Activated B cell treated with CpG ODN at 0.5 μM for 24 hours (primary cell): ENCODE measurements at regions of chr1 and their contacts with region 1.

Region 1: GRCh38 chr1:3624200-3625136 is at the start of gene TPRG1L:
- DNase-seq: peak; percentile 99
- ATAC-seq: peak; percentile 97
- H3K4me3 Mint-ChIP-seq: peak within 1 kb of the TSS; percentile 95
- H3K27ac Mint-ChIP-seq: peak within 1 kb of the TSS; percentile 82
- H3K4me1 Mint-ChIP-seq: peaks cover 46% of the 10 kb centered on the region
- H3K27me3 Mint-ChIP-seq: no peaks in the 10 kb centered on the region
- CTCF ChIP-seq: no peak
- total RNA-seq, gene TPRG1L: 26.5 and 27.0 TPM in 2 replicates

Region 2: GRCh38 chr1:2642560-2643413 is 981.7 kb before region 1 on chr1:
- CTCF ChIA-PET with region 1: no interaction called
- POLR2A ChIA-PET with region 1: no interaction called
- intact Hi-C with region 1: loop called (anchors 10 kb)
- DNase-seq: peak; percentile 92
- ATAC-seq: peak; percentile 79
- H3K4me3 Mint-ChIP-seq: peak overlapping the region; percentile 80
- H3K27ac Mint-ChIP-seq: peak overlapping the region; percentile 73
- H3K4me1 Mint-ChIP-seq: peaks cover 11% of the 10 kb centered on the region
- H3K27me3 Mint-ChIP-seq: peaks cover 3% of the 10 kb centered on the region
- CTCF ChIP-seq: no peak

Region 3: DNA sequence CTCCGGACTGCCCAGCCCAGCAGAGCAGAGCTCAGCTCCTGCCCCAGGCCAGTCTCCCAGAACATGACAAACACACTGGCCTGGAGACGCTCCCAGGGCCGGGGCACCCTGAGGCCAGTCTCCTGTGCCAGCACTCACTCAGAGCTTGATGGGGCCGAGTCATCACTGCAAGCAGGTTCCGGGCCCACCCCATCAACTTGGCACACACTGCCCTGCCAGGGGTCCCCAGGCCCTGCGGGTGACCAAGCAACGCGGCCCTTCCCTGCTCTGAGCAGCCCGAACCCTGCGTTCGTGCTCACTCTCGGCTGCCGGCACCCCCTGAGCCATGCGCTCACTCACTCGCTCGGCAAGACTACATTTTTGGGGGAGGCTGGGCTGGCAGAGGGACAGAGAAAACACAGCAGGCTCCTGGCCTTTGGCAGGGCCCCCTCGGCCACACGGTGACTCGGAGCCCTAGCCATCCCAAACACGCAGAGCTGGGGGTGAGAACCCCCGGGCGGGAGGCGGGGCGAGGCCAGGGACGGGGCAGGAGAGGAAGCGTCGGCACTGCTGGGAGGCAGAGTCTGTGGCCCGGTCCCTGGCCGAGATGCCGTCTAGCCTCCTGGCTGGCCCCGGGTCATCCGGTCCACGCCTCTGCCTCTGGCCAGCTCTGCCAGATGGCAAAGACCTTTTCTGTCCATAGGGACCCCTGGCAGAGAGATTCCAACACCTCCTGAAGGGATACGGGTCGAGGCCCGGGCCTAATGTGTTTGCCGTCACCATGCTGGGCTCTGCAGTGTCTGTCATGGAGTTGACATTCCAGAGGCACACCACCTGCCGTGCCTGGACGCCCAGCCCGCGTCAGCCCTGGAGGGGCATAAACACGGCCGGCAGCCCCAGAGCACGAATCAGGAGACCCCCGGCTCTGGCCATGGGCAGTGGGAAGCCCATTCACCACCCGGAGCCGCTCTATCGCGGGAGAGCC is 81.1 kb before region 1 on chr1:
- CTCF ChIA-PET with region 1: no interaction called
- POLR2A ChIA-PET with region 1: no interaction called
- intact Hi-C with region 1: no loop called
- DNase-seq: no peak
- ATAC-seq: no peak
- H3K4me3 Mint-ChIP-seq: no peak overlapping the region
- H3K27ac Mint-ChIP-seq: no peak overlapping the region
- H3K4me1 Mint-ChIP-seq: peaks cover 2% of the 10 kb centered on the region
- H3K27me3 Mint-ChIP-seq: peaks cover 1% of the 10 kb centered on the region
- CTCF ChIP-seq: no peak

Region 4: GRCh38 chr1:3649342-3650247 is 25.1 kb after region 1 on chr1 and contains the start of gene WRAP73:
- CTCF ChIA-PET with region 1: interaction called, 5 read pairs
- POLR2A ChIA-PET with region 1: no interaction called
- intact Hi-C with region 1: loop called (anchors 1 kb)
- DNase-seq: peak; percentile 84
- ATAC-seq: peak; percentile 97
- H3K4me3 Mint-ChIP-seq: peak within 1 kb of the TSS; percentile 82
- H3K27ac Mint-ChIP-seq: no peak within 1 kb of the TSS
- H3K4me1 Mint-ChIP-seq: peaks cover 29% of the 10 kb centered on the region
- H3K27me3 Mint-ChIP-seq: peaks cover 16% of the 10 kb centered on the region
- CTCF ChIP-seq: no peak
- total RNA-seq, gene WRAP73: 27.0 and 30.1 TPM in 2 replicates

Region 5: DNA sequence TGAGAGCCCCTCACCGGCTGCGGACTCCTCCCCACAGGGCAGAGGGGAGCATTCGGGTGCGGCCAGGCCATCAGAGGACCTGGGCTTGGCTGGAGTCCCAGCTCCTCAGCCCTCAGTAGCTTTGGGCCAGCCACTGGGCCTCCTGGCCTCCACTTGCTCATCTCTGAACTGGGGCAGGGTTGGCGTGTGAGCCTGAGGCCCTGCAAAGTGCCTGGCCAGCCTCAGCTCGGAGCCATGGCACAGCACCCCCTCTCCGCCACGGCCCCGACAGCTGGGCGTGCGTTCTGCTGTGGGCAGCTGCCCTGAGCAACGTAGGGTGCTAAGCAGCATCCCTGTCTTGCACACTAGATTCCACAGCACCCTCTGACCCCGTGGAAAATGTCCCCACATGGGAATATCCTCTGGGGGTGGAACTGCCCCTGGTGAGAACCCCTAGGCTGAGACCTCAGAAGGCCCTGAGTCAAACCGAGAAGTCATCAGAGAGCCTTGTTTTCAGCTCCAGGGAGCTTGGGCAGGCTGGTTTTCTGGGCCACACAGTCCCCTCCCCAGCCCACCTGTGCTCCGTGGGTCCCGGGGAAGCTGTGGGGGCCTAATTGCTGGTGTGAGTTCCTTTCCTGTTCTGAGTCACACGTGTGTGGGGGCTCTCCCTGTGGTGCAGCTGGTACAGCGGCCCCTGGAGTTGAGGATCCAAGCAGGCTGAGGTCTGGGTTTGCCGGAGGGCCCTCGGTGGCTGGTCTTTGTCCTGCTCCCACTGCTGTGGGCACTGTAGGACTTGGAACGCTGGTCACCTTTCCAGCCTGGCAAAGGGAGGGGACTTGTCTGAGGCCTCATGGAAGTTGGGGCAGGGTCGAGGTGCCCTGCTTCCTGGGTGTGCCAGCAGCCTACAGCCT is 52.4 kb after region 1 on chr1:
- CTCF ChIA-PET with region 1: no interaction called
- POLR2A ChIA-PET with region 1: interaction called, 3 read pairs
- intact Hi-C with region 1: loop called (anchors 2 kb)
- DNase-seq: peak; percentile 57
- ATAC-seq: peak; percentile 66
- H3K4me3 Mint-ChIP-seq: peak overlapping the region; percentile 69
- H3K27ac Mint-ChIP-seq: peak overlapping the region; percentile 81
- H3K4me1 Mint-ChIP-seq: peaks cover 84% of the 10 kb centered on the region
- H3K27me3 Mint-ChIP-seq: no peaks in the 10 kb centered on the region
- CTCF ChIP-seq: no peak